ENCODE measurements at regions of chr22 and their contacts with region 1.

Region 1: GRCh38 chr22:38753948-38754750 is 1.6 kb downstream of the SUN2 start:
- DNase-seq: peak; percentile 76 to 77
- H3K4me3 ChIP-seq: peak overlapping the region in 1 of 3 donors; percentile 63
- H3K27ac ChIP-seq: peak overlapping the region; percentile 91 to 95 (median 94)
- H3K4me1 ChIP-seq: peaks cover 16 to 36% of the 10 kb centered on the region in 2 donors
- H3K27me3 ChIP-seq: no peaks in the 10 kb centered on the region
- CTCF ChIP-seq: no peak
- POLR2A ChIP-seq: no peak

Region 2: DNA sequence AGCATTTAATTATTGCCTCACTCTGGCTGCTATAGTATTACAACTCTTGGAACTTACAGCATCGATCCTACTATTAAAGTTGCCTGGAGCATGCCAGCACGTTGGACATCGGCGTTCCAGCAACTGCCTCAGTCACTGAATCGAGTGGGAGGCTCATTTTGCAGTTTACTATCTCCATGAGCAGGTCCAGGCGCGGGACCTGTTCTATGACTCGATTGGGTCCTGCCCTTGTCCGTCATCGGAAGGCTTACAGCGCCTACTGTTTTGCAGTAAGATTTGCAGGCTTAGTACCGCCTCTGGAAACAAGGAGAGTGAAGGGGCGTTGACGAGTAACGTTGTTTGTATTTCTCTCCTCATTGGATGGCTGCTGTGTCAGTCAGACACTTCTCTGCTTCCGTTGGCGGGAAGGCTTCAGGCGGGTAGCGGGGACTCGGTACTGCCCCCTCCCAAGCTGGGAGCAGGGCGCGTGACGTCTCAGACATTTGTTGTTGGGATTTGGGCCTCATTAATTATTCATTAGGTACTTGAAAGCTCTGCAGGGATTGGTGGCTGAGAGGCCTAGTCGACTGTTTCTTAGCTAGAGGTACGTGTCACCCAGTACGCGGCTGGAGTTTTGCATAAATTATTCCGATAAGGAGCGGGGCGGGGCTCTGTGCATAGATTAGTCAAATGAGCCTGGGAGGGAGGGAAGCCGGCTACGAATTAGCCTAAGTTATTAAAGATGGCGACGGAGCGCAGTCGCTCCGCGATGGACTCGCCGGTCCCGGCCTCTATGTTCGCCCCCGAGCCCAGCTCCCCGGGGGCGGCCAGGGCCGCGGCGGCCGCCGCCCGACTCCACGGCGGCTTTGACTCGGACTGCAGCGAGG is 48.7 kb before region 1 on chr22 and contains the start of gene GTPBP1:
- intact Hi-C with region 1: loop called (anchors 5 kb)
- DNase-seq: peak; percentile 99
- H3K4me3 ChIP-seq: peak within 1 kb of the TSS; percentile 74 to 96 (median 81)
- H3K27ac ChIP-seq: peak within 1 kb of the TSS; percentile 90 to 97 (median 93)
- H3K4me1 ChIP-seq: peaks cover 19 to 30% of the 10 kb centered on the region in 2 donors
- H3K27me3 ChIP-seq: no peaks in the 10 kb centered on the region
- CTCF ChIP-seq: peak in 2 of 6 experiments; percentile 10 to 26
- POLR2A ChIP-seq: peak; percentile 68 to 97
- total RNA-seq, gene GTPBP1: 51.6 to 117 (median 69.6) TPM

Region 3: GRCh38 chr22:39039306-39040126 is 285.4 kb after region 1 on chr22:
- intact Hi-C with region 1: no loop called
- DNase-seq: no peak
- H3K4me3 ChIP-seq: no peak overlapping the region
- H3K27ac ChIP-seq: no peak overlapping the region
- H3K4me1 ChIP-seq: peaks cover 10% of the 10 kb centered on the region in 2 donors
- H3K27me3 ChIP-seq: no peaks in the 10 kb centered on the region
- CTCF ChIP-seq: no peak
- POLR2A ChIP-seq: no peak